ENCODE measurements at regions of chr1 and their contacts with region 1.

Region 1: GRCh38 chr1:40373338-40374283 is at the start of gene SMAP2:
- DNase-seq: peak; percentile 92 to 97 (median 95)
- H3K4me3 ChIP-seq: peak within 1 kb of the TSS; percentile 87 to 100 (median 90)
- H3K4me3 Mint-ChIP-seq: peak within 1 kb of the TSS; percentile 100
- H3K27ac ChIP-seq: peak within 1 kb of the TSS; percentile 97 to 98
- H3K27ac Mint-ChIP-seq: peak within 1 kb of the TSS; percentile 95 to 99 (median 98)
- H3K4me1 ChIP-seq: peaks cover 32 to 43% of the 10 kb centered on the region in 2 donors
- H3K4me1 Mint-ChIP-seq: peaks cover 51% of the 10 kb centered on the region
- H3K27me3 ChIP-seq: no peaks in the 10 kb centered on the region
- H3K27me3 Mint-ChIP-seq: peaks cover 1 to 3% (median 2%) of the 10 kb centered on the region in 3 donors
- CTCF ChIP-seq: no peak
- polyA plus RNA-seq, gene SMAP2: 302 to 382 (median 359) TPM

Region 2: GRCh38 chr1:40385437-40386358 is 12.1 kb after region 1 on chr1:
- intact Hi-C with region 1: loop called in 1 of 2 experiments (anchors 1 kb)
- DNase-seq: peak; percentile 80 to 93 (median 91)
- H3K4me3 ChIP-seq: peak overlapping the region in 2 of 3 experiments; percentile 31 to 69
- H3K4me3 Mint-ChIP-seq: peak overlapping the region; percentile 60 to 85
- H3K27ac ChIP-seq: peak overlapping the region; percentile 93 to 98
- H3K27ac Mint-ChIP-seq: peak overlapping the region; percentile 95 to 99 (median 98)
- H3K4me1 ChIP-seq: peaks cover 98 to 99% of the 10 kb centered on the region in 2 donors
- H3K4me1 Mint-ChIP-seq: peaks cover 94% of the 10 kb centered on the region
- H3K27me3 ChIP-seq: no peaks in the 10 kb centered on the region
- H3K27me3 Mint-ChIP-seq: peaks cover 0 to 2% (median 0%) of the 10 kb centered on the region in 3 donors
- CTCF ChIP-seq: no peak

Measured in CD14-positive monocyte (primary cell).